ENCODE measurements at regions of chr1 and their contacts with region 1.

Region 1: GRCh38 chr1:84643183-84643582 is 47.1 kb downstream of the SSX2IP start:
- DNase-seq: no peak
- H3K4me3 ChIP-seq: no peak overlapping the region
- H3K27me3 ChIP-seq: no peaks in the 10 kb centered on the region
- CTCF ChIP-seq: no peak

Region 2: GRCh38 chr1:84632673-84633434 is 10.3 kb before region 1 on chr1:
- CTCF ChIA-PET with region 1: interaction called, 11 read pairs
- POLR2A ChIA-PET with region 1: no interaction called
- DNase-seq: no peak
- H3K4me3 ChIP-seq: no peak overlapping the region
- H3K27me3 ChIP-seq: no peaks in the 10 kb centered on the region
- CTCF ChIP-seq: no peak

Region 3: GRCh38 chr1:84973498-84974334 is 330.5 kb after region 1 on chr1:
- CTCF ChIA-PET with region 1: no interaction called
- POLR2A ChIA-PET with region 1: no interaction called
- DNase-seq: no peak
- H3K4me3 ChIP-seq: no peak overlapping the region
- H3K27me3 ChIP-seq: no peaks in the 10 kb centered on the region
- CTCF ChIP-seq: no peak